Activated CD4-positive, alpha-beta T cell treated with anti-CD3 and anti-CD28 coated beads, Interleukin-2, amount 10 ng/mL, durations not matched to agents 24 days and 14 days (primary cell): ENCODE measurements at regions of chrX and their contacts with region 1.

Region 1: DNA sequence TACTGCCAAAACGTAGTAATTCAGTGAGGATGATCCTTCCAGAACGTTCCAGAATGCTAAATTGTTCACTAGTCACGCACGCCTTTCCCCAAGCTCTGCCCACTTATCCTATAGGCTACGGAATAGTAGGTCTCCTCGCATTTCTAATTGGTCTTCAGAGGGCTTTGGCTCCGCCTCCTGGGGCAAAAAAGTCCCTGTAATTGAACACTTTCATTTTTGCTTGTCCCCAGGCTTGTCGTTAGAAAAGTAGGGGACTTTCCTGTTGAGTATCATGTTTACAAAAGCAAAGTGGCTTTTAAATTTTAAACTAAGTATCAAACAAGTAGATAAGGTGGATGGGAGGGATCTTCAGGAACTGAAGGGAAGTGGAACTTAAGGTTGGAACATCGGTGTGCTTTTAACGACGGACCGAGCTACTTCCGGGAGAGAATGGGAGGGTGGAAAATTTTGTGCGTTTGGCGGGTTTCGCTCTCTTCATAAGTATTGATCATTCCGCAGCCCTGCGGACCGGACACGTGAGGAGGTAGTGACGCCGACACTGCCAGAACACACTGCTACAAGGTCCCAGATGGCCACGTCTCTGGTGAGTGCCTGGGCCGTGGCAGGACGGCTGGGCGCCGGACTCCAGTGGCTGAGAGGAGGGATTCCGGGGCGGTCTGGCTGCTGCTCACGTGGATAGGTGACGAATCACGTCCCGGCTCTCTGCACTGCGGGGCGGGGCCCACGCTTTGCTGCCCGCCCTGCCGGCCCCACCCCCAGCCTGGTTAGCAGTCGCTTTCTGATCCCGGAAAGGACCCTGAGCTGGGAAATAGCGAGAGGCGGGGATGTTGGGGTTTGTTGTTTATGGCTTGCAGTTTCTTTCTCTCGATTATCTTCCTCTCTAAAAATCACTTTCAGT is at the start of gene NXT2:
- DNase-seq: peak; percentile 95
- H3K4me3 Mint-ChIP-seq: peak within 1 kb of the TSS; percentile 98
- H3K27ac Mint-ChIP-seq: peak within 1 kb of the TSS; percentile 99
- H3K4me1 Mint-ChIP-seq: peaks cover 14% of the 10 kb centered on the region
- H3K27me3 Mint-ChIP-seq: peaks cover 4% of the 10 kb centered on the region
- total RNA-seq, gene NXT2: 12.5 and 14.1 TPM in 2 replicates

Region 2: DNA sequence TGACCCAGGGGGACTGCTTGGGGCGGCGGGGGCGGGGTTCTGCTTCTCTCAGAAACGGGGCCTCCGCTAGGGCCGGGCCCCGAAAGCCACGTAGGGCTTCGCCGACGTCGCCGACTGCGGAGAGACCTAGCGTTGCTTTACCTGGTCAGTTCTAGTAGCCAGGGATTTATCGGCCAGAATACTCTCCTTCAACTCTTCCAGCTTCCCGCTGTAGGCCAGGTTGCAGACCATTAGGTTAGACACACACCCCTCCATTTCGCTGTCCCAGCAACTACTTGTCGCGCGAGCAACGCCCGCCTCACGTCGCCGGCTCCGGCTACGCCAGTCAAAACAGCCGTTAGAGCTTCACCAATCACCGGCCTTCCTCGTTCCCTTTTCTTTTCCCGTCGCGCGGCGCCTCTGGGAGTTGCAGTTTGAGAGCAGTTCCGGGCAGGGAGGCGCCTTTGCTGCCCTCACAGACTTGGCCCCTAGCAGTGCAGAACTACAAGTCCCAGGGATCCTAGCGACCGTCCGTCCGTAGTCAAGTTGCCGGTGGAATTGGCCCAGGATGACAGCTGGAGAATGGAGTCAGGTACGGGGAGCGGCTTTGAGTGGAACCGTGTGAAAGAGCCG is 1445.3 kb before region 1 on chrX and contains the starts of genes ATG4A and PSMD10:
- intact Hi-C with region 1: loop called (anchors 5 kb)
- DNase-seq: peak; percentile 96
- H3K4me3 Mint-ChIP-seq: no peak within 1 kb of the TSS
- H3K27ac Mint-ChIP-seq: no peak within 1 kb of the TSS
- H3K4me1 Mint-ChIP-seq: peaks cover 6% of the 10 kb centered on the region
- H3K27me3 Mint-ChIP-seq: no peaks in the 10 kb centered on the region
- total RNA-seq, gene ATG4A: 7.8 and 9.4 TPM in 2 replicates
- total RNA-seq, gene PSMD10: 45.2 and 54.8 TPM in 2 replicates

Region 3: GRCh38 chrX:109635176-109635575 is 98.5 kb after region 1 on chrX:
- intact Hi-C with region 1: loop called (anchors 10 kb)
- DNase-seq: peak; percentile 53
- H3K4me3 Mint-ChIP-seq: no peak overlapping the region
- H3K27ac Mint-ChIP-seq: no peak overlapping the region
- H3K4me1 Mint-ChIP-seq: peaks cover 15% of the 10 kb centered on the region
- H3K27me3 Mint-ChIP-seq: no peaks in the 10 kb centered on the region

Region 4: DNA sequence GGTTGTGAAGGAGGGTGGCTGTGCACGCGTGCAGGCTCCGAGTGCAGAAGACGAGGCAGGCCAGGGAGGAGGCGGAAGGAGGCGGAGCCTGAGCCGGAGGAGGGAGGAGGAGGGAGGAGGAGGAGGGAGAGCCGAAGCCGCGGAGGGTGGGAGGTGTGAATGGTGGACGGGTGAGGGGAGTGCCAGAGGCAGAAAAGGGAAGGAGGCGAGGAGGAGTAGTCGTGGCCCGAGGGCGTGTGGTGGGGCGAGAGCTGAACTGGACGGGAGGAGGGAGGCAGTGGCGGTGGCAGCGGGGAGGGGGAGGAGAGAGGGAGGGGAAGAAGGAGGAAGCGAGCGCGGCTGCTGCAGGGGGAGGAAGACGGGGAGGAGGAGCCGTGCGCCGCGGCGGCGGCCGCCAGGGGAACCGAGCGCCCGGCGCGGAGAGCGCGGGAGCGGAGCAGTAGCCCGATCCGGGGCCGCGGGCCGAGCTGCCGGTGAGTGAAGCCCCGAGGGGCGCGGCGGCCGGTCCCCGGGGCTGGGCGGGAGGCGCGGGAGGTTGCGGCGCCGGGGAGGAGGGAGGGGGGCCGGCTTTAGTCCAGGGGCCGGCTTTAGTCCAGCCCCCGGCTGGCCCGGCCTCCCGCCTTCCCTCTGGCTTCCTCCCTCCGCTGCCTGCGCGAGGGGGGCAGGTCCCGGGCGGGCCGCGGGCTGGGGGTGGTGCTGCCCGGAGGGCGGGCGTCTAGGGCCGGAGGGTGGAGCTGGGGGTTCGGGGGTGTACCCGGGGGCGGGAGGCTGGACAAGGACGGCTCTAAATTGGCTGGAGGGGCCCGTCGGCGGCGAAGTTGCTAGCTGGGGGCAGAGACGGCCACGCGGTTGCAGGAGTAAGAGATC is 465.8 kb after region 1 on chrX and contains the start of gene TMEM164:
- intact Hi-C with region 1: loop called (anchors 1 kb)
- DNase-seq: peak; percentile 94
- H3K4me3 Mint-ChIP-seq: peak within 1 kb of the TSS; percentile 89
- H3K27ac Mint-ChIP-seq: peak within 1 kb of the TSS; percentile 96
- H3K4me1 Mint-ChIP-seq: peaks cover 28% of the 10 kb centered on the region
- H3K27me3 Mint-ChIP-seq: no peaks in the 10 kb centered on the region
- total RNA-seq, gene TMEM164: 14.9 and 18.3 TPM in 2 replicates